T-cell (primary cell): ENCODE measurements at regions of chr17 and their contacts with region 1.

Region 1: DNA sequence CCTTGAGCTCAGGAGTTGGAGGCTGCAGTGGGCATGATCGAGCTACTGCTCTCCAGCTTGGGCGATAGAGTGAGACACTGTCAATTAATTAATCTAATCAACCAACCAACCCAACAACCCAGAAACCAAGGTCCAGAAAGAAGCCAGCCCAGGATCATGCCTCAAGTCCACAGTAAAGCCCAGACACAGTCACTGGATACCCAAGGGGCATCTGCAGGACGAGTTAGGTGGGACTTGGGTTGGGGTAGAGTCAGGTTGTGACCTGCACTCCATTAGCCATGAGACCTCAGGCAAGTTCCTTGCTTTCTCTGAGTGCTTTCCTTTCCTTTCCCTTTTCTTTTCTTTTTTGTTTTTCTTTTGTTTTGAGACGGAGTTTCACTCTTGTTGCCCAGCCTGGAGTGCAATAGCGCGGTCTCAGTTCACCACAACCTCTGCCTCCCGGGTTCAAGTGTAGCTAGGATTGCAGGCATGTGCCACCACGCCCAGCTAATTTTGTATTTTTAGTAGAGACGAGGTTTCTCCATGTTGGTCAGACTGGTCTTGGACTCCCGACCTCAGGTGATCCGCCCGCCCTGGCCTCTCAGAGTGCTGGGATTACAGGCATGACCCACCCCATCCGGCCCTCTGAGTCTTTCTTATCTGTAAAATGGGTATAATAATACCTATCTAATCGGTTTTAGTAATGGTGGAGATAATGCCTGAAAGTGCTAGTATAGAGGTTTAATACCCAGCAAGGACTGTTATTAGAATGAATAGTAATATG is 3.5 kb upstream of the HSD17B1 start:
- DNase-seq: no peak
- ATAC-seq: no peak
- H3K4me3 ChIP-seq: no peak overlapping the region
- H3K4me3 Mint-ChIP-seq: peak overlapping the region in 2 of 3 donors; percentile 39 to 54
- H3K27ac ChIP-seq: no peak overlapping the region
- H3K27ac Mint-ChIP-seq: no peak overlapping the region
- H3K4me1 ChIP-seq: peaks cover 0 to 33% of the 10 kb centered on the region in 2 experiments
- H3K4me1 Mint-ChIP-seq: peaks cover 16 to 25% (median 20%) of the 10 kb centered on the region in 3 donors
- H3K27me3 ChIP-seq: no peaks in the 10 kb centered on the region
- H3K27me3 Mint-ChIP-seq: no peaks in the 10 kb centered on the region

Region 2: GRCh38 chr17:42529061-42529460 is 20.1 kb before region 1 on chr17:
- CTCF ChIA-PET with region 1: interaction called, 5 to 10 read pairs
- POLR2A ChIA-PET with region 1: no interaction called
- DNase-seq: no peak
- ATAC-seq: no peak
- H3K4me3 ChIP-seq: no peak overlapping the region
- H3K4me3 Mint-ChIP-seq: peak overlapping the region in 1 of 3 donors; percentile 77
- H3K27ac ChIP-seq: no peak overlapping the region
- H3K27ac Mint-ChIP-seq: peak overlapping the region; percentile 85 to 93
- H3K4me1 ChIP-seq: peaks cover 24 to 56% of the 10 kb centered on the region in 2 experiments
- H3K4me1 Mint-ChIP-seq: peaks cover 35 to 42% (median 36%) of the 10 kb centered on the region in 3 donors
- H3K27me3 ChIP-seq: peaks cover 0 to 5% of the 10 kb centered on the region in 2 experiments
- H3K27me3 Mint-ChIP-seq: no peaks in the 10 kb centered on the region

Region 3: GRCh38 chr17:42561908-42562844 is 13.0 kb after region 1 on chr17 and contains the start of gene COASY:
- CTCF ChIA-PET with region 1: no interaction called
- POLR2A ChIA-PET with region 1: no interaction called
- DNase-seq: peak; percentile 75 to 96 (median 85)
- ATAC-seq: peak; percentile 64 to 72 (median 68)
- H3K4me3 ChIP-seq: peak within 1 kb of the TSS; percentile 82 to 93
- H3K4me3 Mint-ChIP-seq: peak within 1 kb of the TSS; percentile 87 to 89 (median 88)
- H3K27ac ChIP-seq: peak within 1 kb of the TSS; percentile 69
- H3K27ac Mint-ChIP-seq: peak within 1 kb of the TSS; percentile 88 to 94
- H3K4me1 ChIP-seq: peaks cover 11 to 53% of the 10 kb centered on the region in 2 experiments
- H3K4me1 Mint-ChIP-seq: peaks cover 14 to 41% (median 41%) of the 10 kb centered on the region in 3 donors
- H3K27me3 ChIP-seq: no peaks in the 10 kb centered on the region
- H3K27me3 Mint-ChIP-seq: no peaks in the 10 kb centered on the region
- total RNA-seq, gene COASY: 43.2 to 79.0 (median 74.9) TPM

Region 4: DNA sequence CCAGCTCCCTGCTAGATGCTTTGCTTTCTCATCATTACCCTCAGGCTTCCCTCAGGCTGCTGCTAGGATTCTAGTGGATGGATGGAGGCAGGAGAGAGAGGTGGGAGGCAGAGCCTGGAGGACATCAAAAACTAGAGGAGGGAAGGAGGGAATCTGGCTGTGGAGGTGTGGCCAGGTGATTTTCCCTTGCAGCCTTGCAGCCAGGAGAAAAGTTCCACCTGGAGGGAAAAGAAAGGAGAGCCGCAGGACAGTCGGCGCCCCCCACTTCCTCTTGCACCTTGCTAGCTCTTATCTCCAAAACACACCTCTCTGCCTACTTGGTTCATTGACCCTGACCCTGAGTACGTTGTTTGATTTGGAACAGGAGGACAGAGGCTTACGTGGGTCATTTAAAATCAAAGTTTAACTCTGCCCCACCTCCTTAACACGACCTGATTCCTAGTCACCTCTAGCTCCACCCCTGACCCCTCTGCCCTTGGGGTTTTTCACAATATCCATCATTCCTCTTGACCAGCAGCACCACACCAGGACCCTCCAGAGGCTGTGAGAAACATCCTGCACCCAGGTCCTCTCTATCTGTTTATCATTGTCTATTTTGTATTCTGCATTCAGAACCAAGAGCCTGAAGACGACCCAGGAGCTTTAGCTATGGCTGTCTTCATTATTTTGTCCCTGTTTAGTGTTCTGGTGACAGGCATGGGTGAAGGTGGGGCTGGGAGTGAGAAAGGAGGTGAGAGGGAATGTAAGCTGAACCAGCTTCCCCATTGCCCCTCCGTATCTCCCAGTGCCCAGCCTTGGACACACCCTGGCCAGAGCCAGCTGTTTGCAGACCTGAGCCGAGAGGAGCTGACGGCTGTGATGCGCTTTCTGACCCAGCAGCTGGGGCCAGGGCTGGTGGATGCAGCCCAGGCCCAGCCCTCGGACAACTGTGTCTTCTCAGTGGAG is 317.7 kb after region 1 on chr17:
- CTCF ChIA-PET with region 1: no interaction called
- POLR2A ChIA-PET with region 1: no interaction called
- DNase-seq: no peak
- ATAC-seq: no peak
- H3K4me3 ChIP-seq: no peak overlapping the region
- H3K4me3 Mint-ChIP-seq: no peak overlapping the region
- H3K27ac ChIP-seq: no peak overlapping the region
- H3K27ac Mint-ChIP-seq: no peak overlapping the region
- H3K4me1 ChIP-seq: no peaks in the 10 kb centered on the region
- H3K4me1 Mint-ChIP-seq: no peaks in the 10 kb centered on the region
- H3K27me3 ChIP-seq: peaks cover 0 to 31% of the 10 kb centered on the region in 2 experiments
- H3K27me3 Mint-ChIP-seq: peaks cover 19 to 27% of the 10 kb centered on the region in 2 donors